Dorsolateral prefrontal cortex (tissue), 120 donors: ENCODE measurements at regions of chr10 and their contacts with region 1.

Region 1: DNA sequence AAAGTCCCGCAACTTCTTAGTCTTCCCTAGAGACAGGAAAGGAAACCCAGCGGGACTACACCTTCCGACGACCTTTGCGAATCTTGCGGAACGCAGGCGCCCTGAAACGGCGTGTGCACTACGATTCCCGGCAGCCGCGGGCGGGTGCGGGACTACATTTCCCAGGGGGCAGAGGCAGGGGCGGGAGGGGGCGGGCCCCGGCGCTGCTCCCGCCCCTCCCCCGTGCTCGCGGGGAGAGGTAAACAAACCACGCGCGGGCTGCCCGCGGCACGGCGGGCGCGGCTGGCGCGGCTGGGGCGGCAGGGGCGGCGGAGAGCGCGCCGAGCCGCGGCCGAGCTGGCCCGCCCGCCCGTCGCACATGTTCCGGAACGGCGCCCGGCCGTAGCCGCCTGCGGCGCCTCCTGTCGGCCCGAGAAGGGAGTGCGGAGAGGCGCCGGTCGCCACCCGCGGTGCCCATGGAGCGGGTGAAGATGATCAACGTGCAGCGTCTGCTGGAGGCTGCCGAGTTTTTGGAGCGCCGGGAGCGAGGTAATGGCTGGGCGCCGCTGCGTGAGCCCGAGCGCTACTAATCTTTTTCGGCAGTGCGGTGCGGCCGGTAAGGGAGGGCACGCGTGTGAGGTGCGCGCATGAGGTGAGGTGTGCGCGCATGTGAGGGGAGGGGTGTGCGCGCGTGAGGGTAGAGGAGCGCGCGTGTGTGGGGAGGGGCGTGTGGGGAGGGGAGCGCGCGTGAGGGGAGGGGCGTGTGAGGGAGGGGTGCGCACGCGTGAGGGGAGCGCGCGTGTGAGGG is 18.5 kb downstream of the MXI1 start:
- DNase-seq: peak; percentile 80 to 94 (median 92)
- H3K4me3 ChIP-seq: peak overlapping the region; percentile 49 to 98 (median 86)
- H3K27ac ChIP-seq: peak overlapping the region; percentile 78 to 100 (median 99)
- H3K27me3 ChIP-seq: no peaks in the 10 kb centered on the region
- CTCF ChIP-seq: peak; percentile 16 to 78 (median 60)

Region 2: GRCh38 chr10:109894516-109894915 is 331.4 kb before region 1 on chr10:
- intact Hi-C with region 1: loop called in 1 of 2 experiments (anchors 5 kb)
- DNase-seq: peak; percentile 36 to 81 (median 74)
- H3K4me3 ChIP-seq: peak overlapping the region in 4 of 59 donors; percentile 5 to 20 (median 19)
- H3K27ac ChIP-seq: peak overlapping the region; percentile 5 to 94 (median 82)
- H3K27me3 ChIP-seq: no peaks in the 10 kb centered on the region
- CTCF ChIP-seq: peak in 1 of 56 donors; percentile 39

Region 3: GRCh38 chr10:110007701-110008517 is 218.0 kb before region 1 on chr10 and contains the start of gene ADD3:
- intact Hi-C with region 1: loop called in 1 of 2 experiments (anchors 10 kb)
- DNase-seq: peak; percentile 90 to 98 (median 94)
- H3K4me3 ChIP-seq: peak within 1 kb of the TSS; percentile 73 to 99 (median 94)
- H3K27ac ChIP-seq: peak within 1 kb of the TSS; percentile 84 to 99 (median 97)
- H3K27me3 ChIP-seq: no peaks in the 10 kb centered on the region
- CTCF ChIP-seq: peak in 8 of 56 donors; percentile 3 to 23 (median 12)
- total RNA-seq, gene ADD3: 171 to 457 (median 267) TPM

Region 4: GRCh38 chr10:110083884-110084283 is 142.1 kb before region 1 on chr10:
- intact Hi-C with region 1: no loop called
- DNase-seq: no peak
- H3K4me3 ChIP-seq: no peak overlapping the region
- H3K27ac ChIP-seq: peak overlapping the region in 57 of 59 donors; percentile 1 to 96 (median 88)
- H3K27me3 ChIP-seq: no peaks in the 10 kb centered on the region
- CTCF ChIP-seq: no peak

Region 5: DNA sequence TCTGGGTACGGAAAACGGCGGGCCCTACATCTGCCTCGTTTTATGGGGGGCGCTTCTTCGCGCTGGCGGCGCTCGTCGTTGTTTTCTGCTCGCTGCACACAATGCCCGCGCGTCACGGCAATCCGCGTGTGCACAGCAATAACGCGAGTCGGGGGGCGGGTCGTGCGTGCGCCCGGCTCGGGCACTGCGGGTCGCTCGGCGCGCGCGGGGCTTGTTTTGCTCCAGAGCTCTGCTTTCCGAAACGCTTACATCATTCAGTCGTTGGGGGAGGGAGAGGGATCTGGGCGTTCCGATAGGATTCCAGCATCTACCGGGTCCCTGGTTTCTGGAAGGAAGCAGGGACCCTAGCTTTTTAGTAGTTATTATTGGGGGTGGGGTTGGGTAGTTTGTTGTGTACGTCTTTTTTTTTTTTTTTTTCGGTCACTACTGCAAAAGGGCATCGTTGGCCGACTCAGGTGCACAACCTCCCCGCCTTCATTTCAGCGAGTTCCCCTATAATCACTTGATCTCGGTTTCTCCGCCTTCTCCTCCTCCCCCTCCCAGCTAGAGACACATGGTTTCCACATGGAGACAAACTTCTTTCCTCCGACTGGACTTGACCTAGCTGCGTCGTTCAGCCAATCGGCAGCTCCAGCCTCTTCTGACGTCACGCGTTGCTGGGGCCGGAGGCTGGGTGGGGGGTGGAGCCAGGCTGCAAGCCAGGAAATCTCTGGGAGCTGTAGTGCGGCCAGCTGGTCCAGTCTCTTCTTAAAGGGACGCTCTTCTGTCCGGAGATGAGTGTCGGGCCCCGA is 15.1 kb before region 1 on chr10:
- intact Hi-C with region 1: loop called (anchors 1 kb)
- DNase-seq: peak; percentile 97 to 100 (median 99)
- H3K4me3 ChIP-seq: peak overlapping the region; percentile 57 to 96 (median 86)
- H3K27ac ChIP-seq: peak overlapping the region; percentile 88 to 100 (median 100)
- H3K27me3 ChIP-seq: no peaks in the 10 kb centered on the region
- CTCF ChIP-seq: peak in 12 of 56 donors; percentile 0 to 35 (median 16)

Region 6: DNA sequence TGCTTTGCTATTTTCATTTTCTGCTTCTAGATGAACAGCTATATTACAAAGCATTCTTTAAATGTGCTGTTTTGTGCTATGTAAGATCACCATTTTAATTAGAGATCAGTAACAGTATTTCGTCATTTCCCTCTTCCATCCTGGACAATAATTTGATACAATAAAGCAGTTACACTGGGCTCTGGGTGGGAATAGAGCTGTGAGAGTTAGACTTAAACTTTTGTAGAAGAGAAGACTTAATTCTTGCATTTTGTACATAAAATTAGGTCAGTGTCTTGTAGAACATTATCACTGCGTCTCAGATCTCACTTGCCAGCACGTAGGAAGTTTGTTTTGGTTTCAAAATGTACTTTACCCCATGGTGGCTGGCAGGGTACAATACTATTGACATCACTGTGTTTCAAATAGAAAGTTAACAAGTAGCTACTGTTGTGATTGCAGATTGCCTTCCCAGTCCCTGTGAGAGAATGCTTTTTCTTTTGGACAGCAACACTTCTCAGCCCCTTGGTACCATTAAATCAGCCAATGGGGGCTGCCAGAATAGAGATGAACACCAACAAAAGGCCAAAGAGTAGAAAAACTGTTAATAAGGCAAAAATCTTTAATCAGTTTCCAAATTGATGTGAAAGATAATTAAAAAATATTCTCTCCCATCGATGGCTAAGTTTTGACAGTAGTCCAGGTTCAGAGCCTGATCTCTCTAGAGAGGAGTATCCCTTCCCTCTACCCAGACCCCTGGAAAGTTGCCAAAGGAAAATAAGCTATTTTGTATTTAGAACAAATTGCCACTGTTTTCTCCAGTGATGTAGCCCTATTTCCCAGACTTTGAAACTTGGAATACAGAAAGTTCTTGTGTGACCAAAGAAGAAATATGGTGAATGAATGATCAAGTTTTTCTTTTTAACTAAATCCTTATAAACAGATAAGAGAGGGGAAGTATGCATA is 43.7 kb after region 1 on chr10:
- intact Hi-C with region 1: loop called in 1 of 2 experiments (anchors 2 kb)
- DNase-seq: peak in 1 of 10 donors; percentile 45
- H3K4me3 ChIP-seq: peak overlapping the region in 58 of 59 donors; percentile 4 to 62 (median 39)
- H3K27ac ChIP-seq: peak overlapping the region; percentile 83 to 99 (median 97)
- H3K27me3 ChIP-seq: no peaks in the 10 kb centered on the region
- CTCF ChIP-seq: peak in 3 of 56 donors; percentile 4 to 8 (median 5)

Region 7: GRCh38 chr10:110279407-110279986 is 53.5 kb after region 1 on chr10:
- intact Hi-C with region 1: loop called (anchors 2 kb)
- DNase-seq: peak in 5 of 10 donors; percentile 50 to 79 (median 60)
- H3K4me3 ChIP-seq: peak overlapping the region in 45 of 59 donors; percentile 1 to 53 (median 21)
- H3K27ac ChIP-seq: peak overlapping the region; percentile 12 to 99 (median 96)
- H3K27me3 ChIP-seq: no peaks in the 10 kb centered on the region
- CTCF ChIP-seq: peak; percentile 70 to 98 (median 89)

Region 8: DNA sequence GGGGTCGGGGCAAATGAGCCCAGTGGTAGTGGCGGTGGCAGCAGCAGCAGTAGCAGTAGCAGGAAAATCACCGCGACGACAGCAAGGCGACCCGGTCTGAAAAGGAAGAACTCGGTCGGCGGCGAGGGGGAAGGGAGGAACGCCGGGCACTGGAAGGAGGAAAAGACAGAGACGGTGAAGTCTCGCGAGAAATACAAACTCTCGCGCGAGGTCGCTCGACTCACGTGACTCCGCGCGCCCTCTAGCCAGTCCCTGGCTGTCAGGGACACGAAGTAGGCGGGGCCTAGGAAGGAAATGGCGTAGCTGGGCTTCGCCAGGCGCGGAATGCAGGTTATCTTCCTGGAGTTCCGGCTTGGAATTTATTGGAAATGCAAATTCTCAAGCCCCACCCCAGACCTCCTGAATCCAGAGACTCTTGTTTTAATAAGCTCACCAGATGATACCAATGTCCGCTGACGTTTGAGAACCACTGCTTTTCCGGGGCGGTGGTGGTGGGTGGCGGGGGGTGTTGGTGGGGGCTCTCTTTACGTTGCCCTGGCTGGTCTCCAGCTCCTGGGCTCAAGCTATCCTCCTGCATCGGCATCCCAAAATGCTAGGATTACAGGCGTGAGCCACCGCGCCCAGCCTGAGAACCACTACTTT is 79.0 kb after region 1 on chr10 and contains the start of gene SMNDC1:
- intact Hi-C with region 1: loop called in 1 of 2 experiments (anchors 2 kb)
- DNase-seq: peak; percentile 97 to 99 (median 98)
- H3K4me3 ChIP-seq: peak within 1 kb of the TSS; percentile 68 to 98 (median 85)
- H3K27ac ChIP-seq: peak within 1 kb of the TSS; percentile 37 to 96 (median 89)
- H3K27me3 ChIP-seq: no peaks in the 10 kb centered on the region
- CTCF ChIP-seq: peak in 37 of 56 donors; percentile 6 to 61 (median 34)
- total RNA-seq, gene SMNDC1: 17.1 to 34.9 (median 25.4) TPM

Region 9: DNA sequence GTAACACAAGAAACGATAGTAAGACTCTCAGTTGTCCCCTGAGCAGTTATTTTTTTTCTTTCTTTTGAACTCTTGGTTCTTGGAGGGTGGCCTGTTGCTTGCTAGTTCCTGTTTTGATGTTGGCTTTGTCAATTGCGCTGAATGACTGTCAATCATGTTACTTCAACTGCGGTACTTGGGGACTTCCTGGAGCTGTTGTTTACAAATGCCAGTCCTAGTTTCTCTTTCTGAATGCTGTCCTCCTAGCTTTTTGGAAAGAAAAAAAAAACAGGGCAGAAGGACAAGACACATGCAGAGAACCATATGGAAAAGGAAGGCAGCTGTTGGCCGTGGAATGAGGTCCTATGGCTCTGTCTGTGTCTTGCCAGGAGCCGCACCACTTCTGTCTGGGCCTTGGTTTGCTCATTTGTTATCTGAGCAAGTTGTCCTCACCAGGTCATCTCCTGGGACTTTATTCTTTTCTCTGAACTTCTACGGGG is 638.8 kb after region 1 on chr10:
- intact Hi-C with region 1: no loop called
- DNase-seq: peak in 1 of 10 donors; percentile 54
- H3K4me3 ChIP-seq: peak overlapping the region in 5 of 59 donors; percentile 10 to 34 (median 28)
- H3K27ac ChIP-seq: peak overlapping the region in 50 of 59 donors; percentile 2 to 86 (median 66)
- H3K27me3 ChIP-seq: no peaks in the 10 kb centered on the region
- CTCF ChIP-seq: no peak